CD8-positive, alpha-beta T cell (primary cell): ENCODE measurements at regions of chr11 and their contacts with region 1.

Region 1: DNA sequence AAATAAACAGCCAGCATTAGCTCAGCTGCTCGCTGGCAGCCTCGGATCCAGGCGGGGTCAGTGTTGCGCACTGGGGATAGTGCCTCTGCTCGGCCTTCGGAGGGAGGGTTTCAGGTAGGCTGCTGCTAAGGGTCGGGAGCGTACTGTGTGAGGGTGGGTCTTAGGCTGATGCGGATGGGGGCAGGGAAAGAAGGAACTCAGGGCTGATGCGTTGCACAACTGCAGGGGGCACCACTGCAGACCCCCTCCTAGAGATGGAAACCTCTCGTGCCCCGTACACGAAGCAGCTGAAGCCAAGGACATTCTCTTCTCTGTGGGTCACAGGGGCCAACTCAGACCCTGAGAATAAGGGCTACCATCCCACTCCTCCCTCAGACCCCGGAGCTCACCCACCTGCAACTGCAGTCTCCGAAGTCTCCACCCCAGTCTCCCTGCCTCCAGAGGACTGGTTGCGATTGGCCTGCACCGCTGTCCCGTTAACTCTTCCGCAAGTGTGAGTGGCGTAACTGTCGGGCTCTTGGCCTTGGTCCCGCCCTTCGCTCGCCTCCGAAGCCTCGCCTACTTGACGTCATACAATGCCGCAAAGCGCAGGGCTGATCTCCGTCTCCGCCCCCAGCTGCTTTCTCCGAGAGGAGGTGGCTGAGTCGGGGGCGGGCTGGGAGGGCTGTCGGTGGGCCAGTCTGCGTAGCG is at the start of gene KBTBD3:
- DNase-seq: peak; percentile 97 to 100 (median 98)
- ATAC-seq: peak; percentile 91
- H3K4me3 ChIP-seq: peak within 1 kb of the TSS; percentile 88 to 95
- H3K4me3 Mint-ChIP-seq: peak within 1 kb of the TSS; percentile 98
- H3K27ac ChIP-seq: peak within 1 kb of the TSS; percentile 87 to 89
- H3K27ac Mint-ChIP-seq: peak within 1 kb of the TSS; percentile 99
- H3K4me1 ChIP-seq: peaks cover 48% of the 10 kb centered on the region
- H3K4me1 Mint-ChIP-seq: peaks cover 69% of the 10 kb centered on the region
- H3K27me3 ChIP-seq: no peaks in the 10 kb centered on the region
- H3K27me3 Mint-ChIP-seq: no peaks in the 10 kb centered on the region
- CTCF ChIP-seq: peak; percentile 62
- total RNA-seq, gene KBTBD3: 3.3 to 6.7 TPM

Region 2: GRCh38 chr11:104968355-104968855 is 1108.7 kb before region 1 on chr11 and contains the start of gene CASP4:
- CTCF ChIA-PET with region 1: no interaction called
- POLR2A ChIA-PET with region 1: no interaction called
- intact Hi-C with region 1: loop called in 1 of 2 experiments (anchors 5 kb)
- DNase-seq: peak in 2 of 9 experiments; percentile 60 to 76
- ATAC-seq: peak; percentile 71
- H3K4me3 ChIP-seq: peak within 1 kb of the TSS; percentile 64 to 66
- H3K4me3 Mint-ChIP-seq: peak within 1 kb of the TSS; percentile 96
- H3K27ac ChIP-seq: peak within 1 kb of the TSS; percentile 71 to 83
- H3K27ac Mint-ChIP-seq: peak within 1 kb of the TSS; percentile 97
- H3K4me1 ChIP-seq: peaks cover 32% of the 10 kb centered on the region
- H3K4me1 Mint-ChIP-seq: peaks cover 40% of the 10 kb centered on the region
- H3K27me3 ChIP-seq: no peaks in the 10 kb centered on the region
- H3K27me3 Mint-ChIP-seq: no peaks in the 10 kb centered on the region
- CTCF ChIP-seq: no peak
- total RNA-seq, gene CASP4: 63.5 to 75.5 TPM

Region 3: DNA sequence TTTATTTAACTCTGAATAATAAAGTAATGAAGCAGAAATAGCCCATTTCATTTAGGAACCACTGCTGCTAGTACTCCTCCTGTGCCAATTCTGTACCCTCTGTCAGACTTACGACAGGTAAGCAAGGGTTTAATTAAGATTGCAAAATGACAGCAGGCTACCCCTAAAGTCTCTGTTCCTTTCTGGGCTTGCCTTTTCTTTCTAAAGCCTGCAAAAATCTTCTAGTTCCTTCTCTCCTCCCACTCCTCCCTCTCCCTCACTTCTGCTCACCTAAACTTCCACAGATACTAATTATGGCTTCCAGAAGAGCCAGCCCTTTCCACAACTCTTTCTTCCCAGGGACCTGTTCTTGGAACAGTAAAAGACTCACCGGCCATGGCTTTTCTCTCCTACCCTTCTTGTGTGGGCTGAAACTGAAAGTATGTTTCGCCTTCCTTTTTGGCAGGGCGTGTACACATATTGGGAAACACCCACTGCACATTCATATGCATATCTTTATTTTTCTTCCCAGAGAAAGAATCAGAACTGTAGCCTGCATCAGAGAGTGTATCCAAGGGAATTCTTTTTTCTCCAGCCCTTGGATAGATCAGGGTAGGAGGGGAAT is 1032.0 kb before region 1 on chr11 and contains the start of gene CARD16:
- CTCF ChIA-PET with region 1: no interaction called
- POLR2A ChIA-PET with region 1: no interaction called
- intact Hi-C with region 1: loop called in 1 of 2 experiments (anchors 10 kb)
- DNase-seq: peak in 7 of 9 experiments; percentile 21 to 79 (median 42)
- ATAC-seq: peak; percentile 88
- H3K4me3 ChIP-seq: peak within 1 kb of the TSS; percentile 58 to 64
- H3K4me3 Mint-ChIP-seq: peak within 1 kb of the TSS; percentile 95
- H3K27ac ChIP-seq: peak within 1 kb of the TSS; percentile 72 to 77
- H3K27ac Mint-ChIP-seq: peak within 1 kb of the TSS; percentile 96
- H3K4me1 ChIP-seq: peaks cover 26% of the 10 kb centered on the region
- H3K4me1 Mint-ChIP-seq: peaks cover 51% of the 10 kb centered on the region
- H3K27me3 ChIP-seq: no peaks in the 10 kb centered on the region
- H3K27me3 Mint-ChIP-seq: no peaks in the 10 kb centered on the region
- CTCF ChIP-seq: no peak
- total RNA-seq, gene CARD16: 16.0 to 18.7 TPM

Region 4: GRCh38 chr11:105790840-105791239 is 286.2 kb before region 1 on chr11:
- CTCF ChIA-PET with region 1: no interaction called
- POLR2A ChIA-PET with region 1: no interaction called
- intact Hi-C with region 1: no loop called
- DNase-seq: no peak
- ATAC-seq: no peak
- H3K4me3 ChIP-seq: no peak overlapping the region
- H3K4me3 Mint-ChIP-seq: no peak overlapping the region
- H3K27ac ChIP-seq: no peak overlapping the region
- H3K27ac Mint-ChIP-seq: no peak overlapping the region
- H3K4me1 ChIP-seq: no peaks in the 10 kb centered on the region
- H3K4me1 Mint-ChIP-seq: no peaks in the 10 kb centered on the region
- H3K27me3 ChIP-seq: no peaks in the 10 kb centered on the region
- H3K27me3 Mint-ChIP-seq: no peaks in the 10 kb centered on the region
- CTCF ChIP-seq: no peak

Region 5: GRCh38 chr11:106021967-106022794 is 54.9 kb before region 1 on chr11 and contains the start of gene MSANTD4:
- CTCF ChIA-PET with region 1: no interaction called
- POLR2A ChIA-PET with region 1: interaction called, 4 read pairs
- intact Hi-C with region 1: loop called (anchors 1 kb)
- DNase-seq: peak; percentile 89 to 99 (median 95)
- ATAC-seq: peak; percentile 96
- H3K4me3 ChIP-seq: peak within 1 kb of the TSS; percentile 74 to 95
- H3K4me3 Mint-ChIP-seq: peak within 1 kb of the TSS; percentile 99
- H3K27ac ChIP-seq: peak within 1 kb of the TSS; percentile 47 to 79
- H3K27ac Mint-ChIP-seq: peak within 1 kb of the TSS; percentile 93
- H3K4me1 ChIP-seq: peaks cover 24% of the 10 kb centered on the region
- H3K4me1 Mint-ChIP-seq: peaks cover 48% of the 10 kb centered on the region
- H3K27me3 ChIP-seq: no peaks in the 10 kb centered on the region
- H3K27me3 Mint-ChIP-seq: no peaks in the 10 kb centered on the region
- CTCF ChIP-seq: no peak
- total RNA-seq, gene MSANTD4: 4.9 to 5.5 TPM

Region 6: DNA sequence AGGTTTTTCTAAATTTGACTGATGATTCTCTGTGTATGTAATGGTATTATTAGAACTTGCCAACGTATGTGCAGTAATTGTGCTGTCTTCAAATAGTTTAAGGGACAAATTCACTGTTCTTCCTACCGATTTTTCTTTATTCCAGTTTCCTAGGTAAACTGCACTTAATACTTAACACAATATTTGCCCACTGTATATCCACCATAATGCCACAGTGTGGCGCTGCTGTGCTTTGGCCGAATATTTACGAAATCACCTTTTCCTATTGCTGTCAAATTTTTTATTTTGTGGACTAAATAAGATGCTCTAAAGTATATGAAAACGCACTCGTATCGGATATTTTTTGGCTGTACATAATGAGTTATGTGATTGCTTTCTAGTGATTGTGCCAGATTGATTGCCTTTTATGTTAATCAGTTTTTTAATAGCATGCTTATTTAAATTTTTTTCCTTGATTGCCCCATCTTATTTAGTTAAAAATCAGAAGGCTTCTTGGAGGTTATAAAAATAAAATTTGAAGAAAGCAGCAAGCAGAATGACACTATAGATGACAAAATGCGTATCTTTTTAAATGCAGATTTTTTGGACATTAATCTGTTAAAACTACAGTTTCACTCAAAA is 10.9 kb after region 1 on chr11:
- CTCF ChIA-PET with region 1: interaction called, 4 read pairs
- POLR2A ChIA-PET with region 1: interaction called, 11 read pairs
- intact Hi-C with region 1: loop called in 1 of 2 experiments (anchors 1 kb)
- DNase-seq: peak in 7 of 9 experiments; percentile 2 to 61 (median 46)
- ATAC-seq: peak; percentile 63
- H3K4me3 ChIP-seq: no peak overlapping the region
- H3K4me3 Mint-ChIP-seq: no peak overlapping the region
- H3K27ac ChIP-seq: no peak overlapping the region
- H3K27ac Mint-ChIP-seq: no peak overlapping the region
- H3K4me1 ChIP-seq: peaks cover 12% of the 10 kb centered on the region
- H3K4me1 Mint-ChIP-seq: peaks cover 66% of the 10 kb centered on the region
- H3K27me3 ChIP-seq: no peaks in the 10 kb centered on the region
- H3K27me3 Mint-ChIP-seq: no peaks in the 10 kb centered on the region
- CTCF ChIP-seq: peak; percentile 91

Region 7: GRCh38 chr11:107457558-107458271 is 1380.7 kb after region 1 on chr11 and contains the start of gene CWF19L2:
- CTCF ChIA-PET with region 1: no interaction called
- POLR2A ChIA-PET with region 1: no interaction called
- intact Hi-C with region 1: loop called (anchors 5 kb)
- DNase-seq: peak; percentile 80 to 96 (median 88)
- ATAC-seq: peak; percentile 96
- H3K4me3 ChIP-seq: peak within 1 kb of the TSS; percentile 70 to 82
- H3K4me3 Mint-ChIP-seq: peak within 1 kb of the TSS; percentile 92
- H3K27ac ChIP-seq: peak within 1 kb of the TSS; percentile 73 to 81
- H3K27ac Mint-ChIP-seq: peak within 1 kb of the TSS; percentile 94
- H3K4me1 ChIP-seq: peaks cover 7% of the 10 kb centered on the region
- H3K4me1 Mint-ChIP-seq: peaks cover 32% of the 10 kb centered on the region
- H3K27me3 ChIP-seq: no peaks in the 10 kb centered on the region
- H3K27me3 Mint-ChIP-seq: peaks cover 2% of the 10 kb centered on the region
- CTCF ChIP-seq: no peak
- total RNA-seq, gene CWF19L2: 24.3 to 25.2 TPM